ENCODE measurements at regions of chr11 and their contacts with region 1.

Region 1: GRCh38 chr11:32323814-32324130 is 111.6 kb downstream of the WT1 start:
- DNase-seq: no peak
- ATAC-seq: no peak
- H3K4me3 ChIP-seq: no peak overlapping the region
- H3K4me3 Mint-ChIP-seq: no peak overlapping the region
- H3K27ac ChIP-seq: no peak overlapping the region
- H3K27ac Mint-ChIP-seq: no peak overlapping the region
- H3K4me1 ChIP-seq: no peaks in the 10 kb centered on the region
- H3K4me1 Mint-ChIP-seq: no peaks in the 10 kb centered on the region
- H3K27me3 ChIP-seq: no peaks in the 10 kb centered on the region
- H3K27me3 Mint-ChIP-seq: peaks cover 6 to 32% of the 10 kb centered on the region in 2 donors
- CTCF ChIP-seq: no peak

Region 2: GRCh38 chr11:32210556-32210955 is 113.2 kb before region 1 on chr11:
- intact Hi-C with region 1: no loop called
- DNase-seq: no peak
- ATAC-seq: no peak
- H3K4me3 ChIP-seq: no peak overlapping the region
- H3K4me3 Mint-ChIP-seq: no peak overlapping the region
- H3K27ac ChIP-seq: no peak overlapping the region
- H3K27ac Mint-ChIP-seq: no peak overlapping the region
- H3K4me1 ChIP-seq: no peaks in the 10 kb centered on the region
- H3K4me1 Mint-ChIP-seq: no peaks in the 10 kb centered on the region
- H3K27me3 ChIP-seq: no peaks in the 10 kb centered on the region
- H3K27me3 Mint-ChIP-seq: peaks cover 28 to 30% of the 10 kb centered on the region in 2 donors
- CTCF ChIP-seq: no peak

Region 3: GRCh38 chr11:32353870-32354269 is 30.1 kb after region 1 on chr11:
- intact Hi-C with region 1: no loop called
- DNase-seq: no peak
- ATAC-seq: no peak
- H3K4me3 ChIP-seq: no peak overlapping the region
- H3K4me3 Mint-ChIP-seq: no peak overlapping the region
- H3K27ac ChIP-seq: no peak overlapping the region
- H3K27ac Mint-ChIP-seq: no peak overlapping the region
- H3K4me1 ChIP-seq: no peaks in the 10 kb centered on the region
- H3K4me1 Mint-ChIP-seq: no peaks in the 10 kb centered on the region
- H3K27me3 ChIP-seq: no peaks in the 10 kb centered on the region
- H3K27me3 Mint-ChIP-seq: peaks cover 0 to 5% of the 10 kb centered on the region in 2 donors
- CTCF ChIP-seq: no peak

Region 4: DNA sequence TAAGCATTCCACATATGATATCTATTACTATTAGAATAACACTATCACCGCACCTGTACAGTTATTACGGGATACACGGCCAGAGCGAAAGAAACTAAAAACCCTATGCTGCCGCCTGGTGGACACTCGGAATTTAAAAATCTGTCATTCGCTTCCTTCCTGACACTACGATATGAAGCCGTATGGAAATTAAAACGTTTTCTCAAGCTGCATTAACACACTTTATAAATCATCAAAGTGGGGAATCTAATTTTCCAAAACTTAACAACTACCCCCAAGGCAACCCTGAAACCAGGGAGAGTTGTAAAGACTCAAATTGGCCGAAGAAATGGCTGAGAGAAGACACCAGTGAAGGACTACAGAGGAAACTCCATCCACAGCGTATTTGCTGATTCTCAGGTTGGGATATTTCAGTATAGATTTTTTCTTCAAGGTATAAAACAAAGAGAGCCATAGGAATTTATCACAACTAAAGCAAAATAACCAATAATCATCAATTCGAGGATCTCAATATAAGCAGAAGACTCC is 469.2 kb after region 1 on chr11:
- intact Hi-C with region 1: loop called (anchors 2 kb)
- DNase-seq: peak; percentile 37 to 75
- ATAC-seq: peak; percentile 65 to 84 (median 69)
- H3K4me3 ChIP-seq: peak overlapping the region; percentile 12
- H3K4me3 Mint-ChIP-seq: peak overlapping the region; percentile 45
- H3K27ac ChIP-seq: no peak overlapping the region
- H3K27ac Mint-ChIP-seq: no peak overlapping the region
- H3K4me1 ChIP-seq: peaks cover 6% of the 10 kb centered on the region
- H3K4me1 Mint-ChIP-seq: peaks cover 0 to 4% of the 10 kb centered on the region in 2 donors
- H3K27me3 ChIP-seq: no peaks in the 10 kb centered on the region
- H3K27me3 Mint-ChIP-seq: no peaks in the 10 kb centered on the region
- CTCF ChIP-seq: peak; percentile 82

Measured in natural killer cell (primary cell).